Ascending aorta (tissue), 2 donors: ENCODE measurements at regions of chr4 and their contacts with region 1.

Region 1: GRCh38 chr4:108650212-108651013 is at the start of gene OSTC:
- DNase-seq: peak; percentile 75 to 97
- H3K4me3 ChIP-seq: peak within 1 kb of the TSS; percentile 52 to 95
- H3K27ac ChIP-seq: peak within 1 kb of the TSS; percentile 81 to 82
- H3K4me1 ChIP-seq: peaks cover 0 to 9% of the 10 kb centered on the region in 2 donors
- H3K27me3 ChIP-seq: no peaks in the 10 kb centered on the region
- CTCF ChIP-seq: peak in 2 of 3 experiments; percentile 21 to 36
- total RNA-seq, gene OSTC: 50.4 TPM

Region 2: GRCh38 chr4:108172753-108173598 is 477.4 kb before region 1 on chr4:
- intact Hi-C with region 1: loop called (anchors 10 kb)
- DNase-seq: peak in 1 of 2 donors; percentile 70
- H3K4me3 ChIP-seq: peak overlapping the region; percentile 49 to 68
- H3K27ac ChIP-seq: peak overlapping the region in 1 of 2 donors; percentile 27
- H3K4me1 ChIP-seq: peaks cover 7 to 10% of the 10 kb centered on the region in 2 donors
- H3K27me3 ChIP-seq: peaks cover 14% of the 10 kb centered on the region
- CTCF ChIP-seq: no peak

Region 3: DNA sequence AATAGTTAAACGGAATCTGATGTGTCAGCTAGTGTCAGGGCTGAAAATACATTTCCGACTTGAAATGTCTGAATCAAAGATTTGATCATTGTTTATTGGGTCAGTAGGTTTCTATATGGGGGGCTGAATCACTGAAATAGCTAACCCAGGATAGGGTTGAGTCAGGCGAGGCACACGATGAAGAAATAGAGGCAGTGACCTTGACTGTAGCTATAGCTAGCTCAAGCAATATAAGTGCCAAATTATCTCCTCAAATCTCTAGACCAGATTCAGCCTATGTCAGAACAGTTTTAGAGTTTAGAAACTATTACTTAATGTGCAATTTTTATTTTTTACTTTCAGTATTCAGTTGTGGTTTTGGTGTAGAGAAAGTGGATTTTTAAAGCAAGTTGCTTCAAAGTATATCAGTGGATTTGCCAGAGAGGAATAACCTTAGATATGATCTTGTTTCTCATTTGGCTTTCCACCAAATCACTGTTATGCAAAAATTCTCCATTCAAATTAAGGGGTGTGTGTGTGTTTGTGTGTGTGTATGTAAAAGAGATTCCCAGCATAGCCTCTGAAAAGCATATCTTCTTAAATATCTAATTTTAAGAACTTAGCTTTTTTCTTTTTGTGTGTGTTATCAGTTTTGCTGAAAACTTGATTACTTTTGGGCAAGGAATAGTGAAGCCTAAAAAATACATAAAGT is 130.4 kb before region 1 on chr4:
- intact Hi-C with region 1: no loop called
- DNase-seq: no peak
- H3K4me3 ChIP-seq: no peak overlapping the region
- H3K27ac ChIP-seq: no peak overlapping the region
- H3K4me1 ChIP-seq: no peaks in the 10 kb centered on the region
- H3K27me3 ChIP-seq: no peaks in the 10 kb centered on the region
- CTCF ChIP-seq: no peak

Region 4: GRCh38 chr4:108620101-108620932 is 30.1 kb before region 1 on chr4 and contains the start of gene RPL34:
- intact Hi-C with region 1: loop called (anchors 1 kb)
- DNase-seq: peak; percentile 89 to 99
- H3K4me3 ChIP-seq: peak within 1 kb of the TSS; percentile 66 to 83
- H3K27ac ChIP-seq: peak within 1 kb of the TSS; percentile 82 to 85
- H3K4me1 ChIP-seq: peaks cover 3 to 11% of the 10 kb centered on the region in 2 donors
- H3K27me3 ChIP-seq: no peaks in the 10 kb centered on the region
- CTCF ChIP-seq: no peak
- total RNA-seq, gene RPL34: 571 TPM

Region 5: DNA sequence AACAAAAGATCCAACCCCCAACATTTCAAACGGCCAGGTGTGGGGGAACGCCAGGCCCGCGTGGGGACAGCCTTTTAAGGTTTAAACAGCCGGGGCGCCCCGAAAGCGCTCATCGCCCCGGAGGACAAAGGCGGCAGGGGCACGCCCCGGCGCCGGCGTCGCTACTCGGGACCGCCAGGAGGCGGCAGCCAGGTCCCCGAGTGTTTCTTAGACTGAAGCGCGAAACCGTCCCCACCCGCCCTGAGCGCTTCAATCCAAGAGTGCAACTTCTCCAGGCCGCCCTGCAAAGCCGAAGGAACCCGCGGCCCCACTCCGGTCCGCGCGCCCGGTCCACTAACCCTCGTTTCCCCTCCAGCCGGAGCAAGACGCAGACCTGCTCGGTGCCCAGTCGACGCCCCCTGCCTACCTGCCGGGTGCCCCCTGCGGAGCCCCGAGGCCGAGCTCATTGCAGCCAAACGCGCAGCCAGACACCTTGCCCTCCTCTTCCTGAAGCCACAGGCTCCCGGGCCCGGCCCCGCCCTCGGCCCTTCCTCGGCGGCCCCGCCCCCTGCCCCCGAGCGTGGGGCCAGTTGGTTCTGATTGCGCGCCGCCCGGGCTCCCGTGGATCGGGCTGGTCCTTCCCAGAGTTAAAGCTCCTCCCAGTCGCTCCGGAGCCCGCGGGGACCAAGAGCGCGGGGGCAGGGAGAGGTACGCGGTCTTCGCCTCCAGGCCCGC is 1052.7 kb after region 1 on chr4 and contains the start of gene CASP6:
- intact Hi-C with region 1: loop called (anchors 2 kb)
- DNase-seq: peak; percentile 52 to 92
- H3K4me3 ChIP-seq: peak within 1 kb of the TSS; percentile 58 to 77
- H3K27ac ChIP-seq: peak within 1 kb of the TSS; percentile 73 to 82
- H3K4me1 ChIP-seq: peaks cover 6 to 15% of the 10 kb centered on the region in 2 donors
- H3K27me3 ChIP-seq: no peaks in the 10 kb centered on the region
- CTCF ChIP-seq: peak; percentile 65 to 74 (median 69)
- total RNA-seq, gene CASP6: not detected